Activated CD8-positive, alpha-beta T cell treated with anti-CD3 and anti-CD28 coated beads for 36 hours (primary cell): ENCODE measurements at regions of chr3 and their contacts with region 1.

Region 1: DNA sequence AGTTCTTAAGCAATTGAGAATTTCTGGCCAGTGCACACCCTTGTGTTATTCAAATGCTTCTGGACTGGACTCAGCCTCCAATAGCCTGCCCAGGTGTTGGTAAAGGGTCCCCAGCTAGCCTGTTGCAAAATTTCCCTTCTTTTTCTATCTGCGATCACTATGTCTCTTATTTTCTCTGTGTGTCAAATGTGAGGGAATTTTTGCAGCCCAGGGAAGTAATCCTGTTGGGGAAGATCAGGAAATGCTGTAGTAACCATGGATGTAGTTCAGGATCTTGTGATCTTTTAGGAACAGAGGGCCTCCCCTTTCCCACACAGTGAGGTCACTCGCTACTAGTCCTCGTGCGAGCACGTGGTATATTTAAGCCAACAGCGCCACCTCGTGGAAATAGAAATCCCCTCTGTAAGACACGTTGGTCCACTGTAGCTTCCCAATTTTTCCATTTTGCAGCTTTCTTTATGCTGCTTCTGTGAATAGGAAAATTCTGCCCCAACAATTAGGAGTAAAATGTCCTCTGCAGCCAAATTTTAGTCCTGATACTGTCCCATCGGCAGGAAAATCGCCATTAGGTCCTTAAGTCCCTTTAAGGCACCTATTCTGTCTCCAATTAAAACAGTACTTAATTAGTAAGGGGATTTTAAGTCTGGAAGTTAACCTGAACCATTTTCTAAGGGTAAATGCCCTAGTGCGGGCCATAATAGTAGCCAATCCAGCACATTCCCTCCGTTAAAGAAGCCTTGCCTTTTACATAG is 4.0 kb upstream of the SMCO1 start:
- DNase-seq: peak; percentile 83
- ATAC-seq: peak; percentile 45
- H3K4me3 Mint-ChIP-seq: no peak overlapping the region
- H3K27ac Mint-ChIP-seq: no peak overlapping the region
- H3K4me1 Mint-ChIP-seq: no peaks in the 10 kb centered on the region
- H3K27me3 Mint-ChIP-seq: no peaks in the 10 kb centered on the region
- CTCF ChIP-seq: peak; percentile 75

Region 2: GRCh38 chr3:196251918-196252317 is 267.2 kb before region 1 on chr3:
- CTCF ChIA-PET with region 1: interaction called, 50 read pairs
- POLR2A ChIA-PET with region 1: interaction called, 3 read pairs
- intact Hi-C with region 1: loop called (anchors 5 kb)
- DNase-seq: no peak
- ATAC-seq: no peak
- H3K4me3 Mint-ChIP-seq: no peak overlapping the region
- H3K27ac Mint-ChIP-seq: no peak overlapping the region
- H3K4me1 Mint-ChIP-seq: peaks cover 2% of the 10 kb centered on the region
- H3K27me3 Mint-ChIP-seq: no peaks in the 10 kb centered on the region
- CTCF ChIP-seq: no peak

Region 3: DNA sequence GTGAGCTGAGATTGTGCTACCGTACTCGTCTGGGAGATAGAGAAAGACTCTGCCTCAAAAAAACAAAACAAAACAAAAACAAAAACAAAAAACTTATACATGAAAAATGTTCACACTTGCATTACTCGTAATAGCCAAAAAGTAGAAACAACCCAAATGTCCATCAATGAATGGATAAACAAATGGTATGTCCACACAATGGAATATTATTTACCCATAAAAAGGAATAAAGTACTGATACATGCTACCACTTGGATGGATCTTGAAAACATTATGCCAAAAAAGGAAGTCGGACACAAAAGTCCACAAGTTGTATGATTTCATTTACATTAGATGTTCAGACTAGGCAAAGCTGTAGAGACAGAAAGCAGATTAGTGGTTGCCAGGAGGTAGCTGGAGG is 258.4 kb before region 1 on chr3:
- CTCF ChIA-PET with region 1: interaction called, 50 read pairs
- POLR2A ChIA-PET with region 1: interaction called, 3 read pairs
- intact Hi-C with region 1: no loop called
- DNase-seq: no peak
- ATAC-seq: no peak
- H3K4me3 Mint-ChIP-seq: no peak overlapping the region
- H3K27ac Mint-ChIP-seq: no peak overlapping the region
- H3K4me1 Mint-ChIP-seq: no peaks in the 10 kb centered on the region
- H3K27me3 Mint-ChIP-seq: no peaks in the 10 kb centered on the region
- CTCF ChIP-seq: no peak

Region 4: DNA sequence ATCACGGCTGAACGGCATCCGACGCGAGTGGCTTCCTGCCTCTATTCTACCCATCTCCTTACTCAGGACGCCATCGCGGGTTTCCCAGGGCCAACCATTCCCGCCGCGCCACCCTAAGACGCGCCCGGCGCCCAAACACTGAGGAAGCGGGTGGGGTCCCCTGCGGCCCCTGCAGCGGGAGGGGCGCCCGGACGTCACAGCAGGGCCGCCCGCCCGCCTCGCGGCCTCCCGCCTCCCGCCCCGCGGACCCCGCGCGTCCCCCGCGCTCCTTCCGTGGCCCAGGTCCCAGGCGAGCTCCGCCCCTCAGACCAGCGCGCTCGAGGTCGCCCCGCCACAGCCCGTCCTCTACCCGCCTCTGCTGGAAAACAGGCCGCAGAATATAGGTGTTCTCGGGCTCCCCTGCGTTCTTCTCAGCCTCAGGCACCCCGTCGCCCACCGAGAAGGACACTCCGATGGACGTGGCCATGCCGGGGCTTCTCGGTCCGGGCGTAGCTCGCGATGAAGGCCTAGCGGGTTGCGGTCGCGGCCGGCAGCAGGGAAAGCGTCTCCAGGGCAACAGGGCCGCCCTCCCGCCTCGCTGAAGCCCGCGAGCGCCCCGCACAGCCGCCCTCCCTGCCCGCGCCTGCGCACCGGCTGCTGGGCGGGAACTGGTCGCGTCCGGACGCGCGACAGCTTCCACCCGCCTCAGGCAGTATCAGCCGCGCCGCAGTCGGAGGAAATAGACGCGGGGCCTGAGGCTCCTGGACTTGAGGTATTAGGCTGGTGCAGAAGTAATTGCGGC is 201.3 kb before region 1 on chr3 and contains the start of gene DYNLT2B:
- CTCF ChIA-PET with region 1: interaction called, 10 read pairs
- POLR2A ChIA-PET with region 1: no interaction called
- intact Hi-C with region 1: no loop called
- DNase-seq: peak; percentile 88
- ATAC-seq: peak; percentile 92
- H3K4me3 Mint-ChIP-seq: peak within 1 kb of the TSS; percentile 92
- H3K27ac Mint-ChIP-seq: peak within 1 kb of the TSS; percentile 95
- H3K4me1 Mint-ChIP-seq: peaks cover 12% of the 10 kb centered on the region
- H3K27me3 Mint-ChIP-seq: no peaks in the 10 kb centered on the region
- CTCF ChIP-seq: no peak
- total RNA-seq, gene DYNLT2B: 8.8 to 9.5 TPM

Region 5: DNA sequence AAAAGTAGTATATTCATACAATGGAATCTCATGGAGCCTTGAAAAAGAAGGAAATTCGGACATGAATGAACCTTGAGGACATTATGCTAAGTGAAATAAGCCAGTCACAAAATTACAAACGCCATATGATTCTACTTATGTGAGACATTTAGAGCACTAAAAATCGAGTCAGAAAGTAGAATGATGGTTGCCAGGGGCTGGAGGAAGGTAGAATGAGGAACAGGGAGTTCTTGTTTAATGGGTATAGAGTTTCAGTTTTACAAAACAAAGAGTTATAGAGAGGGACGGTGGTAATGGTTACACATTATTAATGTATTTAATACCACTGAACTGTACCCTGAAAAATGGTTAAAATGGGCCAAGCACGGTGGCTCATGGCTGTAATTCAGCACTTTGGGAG is 106.4 kb before region 1 on chr3:
- CTCF ChIA-PET with region 1: no interaction called
- POLR2A ChIA-PET with region 1: no interaction called
- intact Hi-C with region 1: no loop called
- DNase-seq: no peak
- ATAC-seq: no peak
- H3K4me3 Mint-ChIP-seq: no peak overlapping the region
- H3K27ac Mint-ChIP-seq: no peak overlapping the region
- H3K4me1 Mint-ChIP-seq: peaks cover 48% of the 10 kb centered on the region
- H3K27me3 Mint-ChIP-seq: no peaks in the 10 kb centered on the region
- CTCF ChIP-seq: no peak

Region 6: DNA sequence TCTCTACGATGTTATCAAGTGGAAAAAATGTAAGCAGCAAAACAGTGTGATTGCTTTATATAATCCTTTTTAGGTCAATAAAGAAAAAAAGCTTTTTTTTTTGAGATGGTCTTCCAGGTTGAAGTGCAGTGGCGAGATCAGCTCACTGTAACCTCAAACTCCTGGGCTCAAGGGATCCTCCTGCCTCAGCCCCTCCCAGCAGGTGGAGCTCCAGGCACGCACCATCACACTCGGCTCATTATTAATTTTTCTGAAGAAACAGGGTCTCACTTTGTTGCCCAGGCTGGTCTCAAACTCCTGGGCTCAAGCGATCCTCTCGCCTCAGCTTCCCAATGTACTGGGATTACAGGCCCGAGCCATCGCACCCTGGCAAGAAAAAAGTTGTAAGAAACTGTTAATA is 32.9 kb before region 1 on chr3:
- CTCF ChIA-PET with region 1: interaction called, 50 read pairs
- POLR2A ChIA-PET with region 1: no interaction called
- intact Hi-C with region 1: no loop called
- DNase-seq: peak; percentile 43
- ATAC-seq: no peak
- H3K4me3 Mint-ChIP-seq: no peak overlapping the region
- H3K27ac Mint-ChIP-seq: no peak overlapping the region
- H3K4me1 Mint-ChIP-seq: peaks cover 7% of the 10 kb centered on the region
- H3K27me3 Mint-ChIP-seq: no peaks in the 10 kb centered on the region
- CTCF ChIP-seq: peak; percentile 56

Region 7: GRCh38 chr3:197283045-197283444 is 763.9 kb after region 1 on chr3:
- CTCF ChIA-PET with region 1: no interaction called
- POLR2A ChIA-PET with region 1: no interaction called
- intact Hi-C with region 1: no loop called
- DNase-seq: no peak
- ATAC-seq: no peak
- H3K4me3 Mint-ChIP-seq: no peak overlapping the region
- H3K27ac Mint-ChIP-seq: no peak overlapping the region
- H3K4me1 Mint-ChIP-seq: peaks cover 13% of the 10 kb centered on the region
- H3K27me3 Mint-ChIP-seq: no peaks in the 10 kb centered on the region
- CTCF ChIP-seq: no peak